Activated CD4-positive, alpha-beta T cell treated with anti-CD3 and anti-CD28 coated beads for 36 hours (primary cell): ENCODE measurements at regions of chr1 and their contacts with region 1.

Region 1: DNA sequence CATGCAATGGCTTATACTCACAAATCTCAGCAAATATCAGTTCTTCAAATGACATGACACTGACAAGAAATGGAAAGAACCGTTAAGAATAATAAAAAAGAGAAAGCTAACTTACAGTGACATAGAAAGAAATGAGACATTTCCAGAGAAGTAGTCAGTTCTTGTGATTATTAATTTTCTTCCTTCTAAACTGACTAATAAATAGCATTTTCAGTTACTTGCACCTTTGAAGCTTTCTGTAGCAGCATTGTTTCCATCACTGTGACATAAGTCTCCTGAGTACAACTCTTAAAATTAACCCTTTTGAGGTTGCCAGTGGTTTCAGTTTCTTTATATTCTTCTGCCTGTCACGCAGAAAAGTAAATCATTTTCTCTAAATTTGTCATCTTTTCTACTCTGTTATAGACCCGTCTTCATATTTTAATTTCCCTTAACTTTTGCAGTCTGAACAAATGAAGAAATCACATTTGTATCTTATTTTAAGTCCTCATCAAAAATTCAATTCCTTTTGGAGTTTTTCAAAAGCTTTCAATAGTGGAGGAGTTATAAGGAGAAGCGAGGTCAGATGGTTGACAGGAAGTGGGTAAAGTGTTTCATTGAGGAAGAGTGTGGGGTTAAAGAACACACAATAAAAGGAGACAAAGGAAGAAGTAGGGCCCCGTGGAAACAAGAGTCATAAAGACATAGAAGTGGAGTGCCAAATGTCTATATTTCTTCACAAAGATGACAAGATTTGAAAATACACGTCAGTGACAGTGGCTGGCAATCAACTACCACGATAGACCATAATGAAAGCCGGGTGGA is 57.9 kb upstream of the S1PR1 start:
- DNase-seq: peak; percentile 65
- ATAC-seq: peak; percentile 69
- H3K4me3 Mint-ChIP-seq: peak overlapping the region; percentile 71
- H3K27ac Mint-ChIP-seq: peak overlapping the region; percentile 99
- H3K4me1 Mint-ChIP-seq: peaks cover 87% of the 10 kb centered on the region
- H3K27me3 Mint-ChIP-seq: no peaks in the 10 kb centered on the region

Region 2: DNA sequence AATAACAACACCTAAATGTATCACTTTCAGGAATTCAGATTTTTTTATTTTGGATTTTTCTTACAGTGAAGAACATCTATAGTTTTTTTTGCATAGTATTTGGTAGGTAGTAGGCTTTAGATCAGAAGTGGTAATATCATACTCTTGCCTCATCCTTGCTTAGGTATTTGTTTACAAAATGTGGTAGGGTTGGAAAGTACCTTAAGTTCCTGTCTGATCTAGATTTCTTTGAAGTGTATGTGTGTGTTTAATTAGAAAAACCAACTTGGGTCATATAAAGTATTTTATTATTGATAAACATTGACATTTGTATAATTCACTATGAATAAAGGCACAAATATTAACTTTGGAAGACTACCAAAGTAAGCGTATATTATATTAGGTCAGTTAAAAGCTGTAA is 726.2 kb before region 1 on chr1:
- CTCF ChIA-PET with region 1: no interaction called
- POLR2A ChIA-PET with region 1: no interaction called
- intact Hi-C with region 1: loop called (anchors 5 to 10 kb)
- DNase-seq: no peak
- ATAC-seq: peak; percentile 65
- H3K4me3 Mint-ChIP-seq: no peak overlapping the region
- H3K27ac Mint-ChIP-seq: peak overlapping the region; percentile 74
- H3K4me1 Mint-ChIP-seq: peaks cover 81% of the 10 kb centered on the region
- H3K27me3 Mint-ChIP-seq: no peaks in the 10 kb centered on the region

Region 3: DNA sequence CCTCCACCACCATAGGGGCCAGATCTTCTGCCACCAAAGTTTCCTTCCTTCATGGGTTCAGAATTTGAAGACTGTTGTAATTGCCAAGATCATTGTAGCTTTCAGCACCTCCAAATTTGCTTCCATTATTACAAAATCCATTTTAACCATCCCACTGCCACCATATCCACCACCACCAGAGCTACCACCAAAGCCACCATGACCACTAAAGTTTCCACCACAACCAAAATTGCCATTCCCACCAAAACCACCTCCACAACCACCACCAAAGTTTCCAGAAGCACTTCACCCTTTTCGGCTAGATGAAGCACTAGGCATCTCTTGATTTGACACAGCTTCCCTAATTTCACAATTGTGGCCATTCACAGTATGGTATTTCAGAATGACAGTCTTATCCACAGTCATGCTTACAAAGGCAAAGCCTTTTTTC is 237.8 kb before region 1 on chr1:
- CTCF ChIA-PET with region 1: interaction called, 3 read pairs
- POLR2A ChIA-PET with region 1: no interaction called
- intact Hi-C with region 1: loop called (anchors 1 to 5 kb)
- DNase-seq: peak; percentile 45
- ATAC-seq: peak; percentile 82
- H3K4me3 Mint-ChIP-seq: peak overlapping the region; percentile 67
- H3K27ac Mint-ChIP-seq: peak overlapping the region; percentile 94
- H3K4me1 Mint-ChIP-seq: peaks cover 45% of the 10 kb centered on the region
- H3K27me3 Mint-ChIP-seq: peaks cover 2% of the 10 kb centered on the region

Region 4: GRCh38 chr1:101136739-101137138 is 42.2 kb before region 1 on chr1:
- CTCF ChIA-PET with region 1: interaction called, 26 read pairs
- POLR2A ChIA-PET with region 1: interaction called, 9 read pairs
- intact Hi-C with region 1: loop called (anchors 1 kb)
- DNase-seq: peak; percentile 45
- ATAC-seq: peak; percentile 85
- H3K4me3 Mint-ChIP-seq: peak overlapping the region; percentile 38
- H3K27ac Mint-ChIP-seq: peak overlapping the region; percentile 91
- H3K4me1 Mint-ChIP-seq: peaks cover 69% of the 10 kb centered on the region
- H3K27me3 Mint-ChIP-seq: no peaks in the 10 kb centered on the region

Region 5: GRCh38 chr1:101257500-101258325 is 78.8 kb after region 1 on chr1:
- CTCF ChIA-PET with region 1: no interaction called
- POLR2A ChIA-PET with region 1: interaction called, 3 read pairs
- intact Hi-C with region 1: loop called (anchors 1 to 5 kb)
- DNase-seq: peak; percentile 38
- ATAC-seq: peak; percentile 6
- H3K4me3 Mint-ChIP-seq: no peak overlapping the region
- H3K27ac Mint-ChIP-seq: peak overlapping the region; percentile 39
- H3K4me1 Mint-ChIP-seq: peaks cover 71% of the 10 kb centered on the region
- H3K27me3 Mint-ChIP-seq: no peaks in the 10 kb centered on the region